Mammary epithelial cell (primary cell): ENCODE measurements at regions of chr14 and their contacts with region 1.

Region 1: DNA sequence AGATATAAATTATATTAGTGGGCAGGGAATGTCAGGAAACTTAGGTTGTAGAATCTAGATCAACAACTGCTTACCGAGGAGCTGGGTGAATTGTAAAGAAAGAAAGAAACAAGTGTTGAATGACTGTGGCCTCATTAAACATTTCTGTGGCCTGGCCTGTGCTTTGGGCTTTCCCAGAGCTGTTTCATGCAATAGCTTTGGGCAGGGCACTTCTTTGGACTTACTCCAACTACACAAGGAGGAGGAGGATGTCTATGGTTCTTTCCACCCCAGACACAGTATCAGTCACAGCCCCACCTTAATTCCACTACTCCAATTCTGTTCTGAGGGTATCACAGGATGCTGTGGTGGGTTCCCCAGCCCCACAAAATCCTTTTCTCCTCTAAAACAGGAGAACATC is 38.0 kb downstream of the DPF3 start:
- DNase-seq: peak; percentile 88
- H3K4me3 ChIP-seq: no peak overlapping the region
- H3K27ac ChIP-seq: no peak overlapping the region
- H3K4me1 ChIP-seq: no peaks in the 10 kb centered on the region
- H3K27me3 ChIP-seq: no peaks in the 10 kb centered on the region
- CTCF ChIP-seq: no peak

Region 2: GRCh38 chr14:72801381-72801812 is 54.5 kb before region 1 on chr14:
- CTCF ChIA-PET with region 1: no interaction called
- dilution Hi-C with region 1: loop called (anchors 5 kb)
- in situ Hi-C with region 1: no loop called
- intact Hi-C with region 1: no loop called
- DNase-seq: peak; percentile 97
- H3K4me3 ChIP-seq: no peak overlapping the region
- H3K27ac ChIP-seq: peak overlapping the region; percentile 78
- H3K4me1 ChIP-seq: peaks cover 19% of the 10 kb centered on the region
- H3K27me3 ChIP-seq: no peaks in the 10 kb centered on the region
- CTCF ChIP-seq: no peak

Region 3: GRCh38 chr14:73091852-73092251 is 235.9 kb after region 1 on chr14:
- CTCF ChIA-PET with region 1: no interaction called
- dilution Hi-C with region 1: no loop called
- in situ Hi-C with region 1: no loop called
- intact Hi-C with region 1: no loop called
- DNase-seq: no peak
- H3K4me3 ChIP-seq: no peak overlapping the region
- H3K27ac ChIP-seq: no peak overlapping the region
- H3K4me1 ChIP-seq: no peaks in the 10 kb centered on the region
- H3K27me3 ChIP-seq: no peaks in the 10 kb centered on the region
- CTCF ChIP-seq: no peak